ENCODE measurements at regions of chr12 and their contacts with region 1.

Region 1: GRCh38 chr12:22443379-22444316 is 100.7 kb downstream of the C2CD5 start:
- H3K4me3 Mint-ChIP-seq: no peak overlapping the region
- H3K27ac Mint-ChIP-seq: no peak overlapping the region
- H3K4me1 Mint-ChIP-seq: peaks cover 11% of the 10 kb centered on the region
- H3K27me3 Mint-ChIP-seq: peaks cover 2% of the 10 kb centered on the region

Region 2: GRCh38 chr12:22083167-22083566 is 360.5 kb before region 1 on chr12:
- intact Hi-C with region 1: loop called (anchors 5 kb)
- H3K4me3 Mint-ChIP-seq: no peak overlapping the region
- H3K27ac Mint-ChIP-seq: no peak overlapping the region
- H3K4me1 Mint-ChIP-seq: peaks cover 6% of the 10 kb centered on the region
- H3K27me3 Mint-ChIP-seq: no peaks in the 10 kb centered on the region

Region 3: DNA sequence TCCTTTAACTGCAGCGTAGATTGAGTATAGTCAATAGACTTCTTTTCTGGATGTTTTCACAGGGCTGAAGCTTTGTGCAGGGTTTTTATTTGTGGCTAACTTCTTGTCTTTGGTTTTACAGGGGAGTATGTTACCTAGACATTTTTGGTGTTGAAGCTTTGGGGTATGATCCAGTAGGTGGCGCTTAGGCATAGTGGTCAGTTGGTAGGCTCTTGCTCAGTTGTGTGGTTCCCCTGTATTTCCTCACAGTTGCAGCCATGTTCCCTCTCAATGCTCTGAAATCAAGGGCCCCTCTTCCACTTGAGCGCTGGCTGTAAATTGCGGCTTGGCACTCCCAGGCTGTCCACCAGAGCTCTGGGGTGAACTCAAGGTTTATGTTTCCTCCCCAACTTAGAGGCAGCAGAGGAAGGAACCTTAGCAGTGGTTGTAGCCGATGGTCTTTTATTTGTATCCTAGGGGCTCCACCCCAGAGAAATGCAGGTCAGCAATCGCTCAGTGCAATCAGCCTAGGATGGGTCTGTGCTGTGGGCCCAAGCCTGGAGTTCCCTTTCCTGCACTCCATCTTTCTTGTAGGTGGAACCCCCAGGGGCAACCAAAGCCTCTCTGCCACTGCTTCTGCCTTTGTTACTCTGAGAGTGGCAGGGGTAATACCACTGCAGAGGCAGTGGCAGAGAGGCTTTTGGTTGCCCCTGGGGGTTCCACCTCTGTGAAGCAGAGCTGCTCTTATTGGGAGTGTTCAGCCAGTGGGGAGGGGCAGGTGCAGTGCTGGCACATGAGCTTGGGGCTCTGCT is 342.5 kb before region 1 on chr12:
- intact Hi-C with region 1: loop called (anchors 1 kb)
- H3K4me3 Mint-ChIP-seq: no peak overlapping the region
- H3K27ac Mint-ChIP-seq: no peak overlapping the region
- H3K4me1 Mint-ChIP-seq: peaks cover 16% of the 10 kb centered on the region
- H3K27me3 Mint-ChIP-seq: no peaks in the 10 kb centered on the region

Region 4: GRCh38 chr12:22334410-22335290 is 109.0 kb before region 1 on chr12 and contains the start of gene ST8SIA1:
- intact Hi-C with region 1: loop called (anchors 10 kb)
- H3K4me3 Mint-ChIP-seq: peak within 1 kb of the TSS; percentile 86
- H3K27ac Mint-ChIP-seq: peak within 1 kb of the TSS; percentile 63
- H3K4me1 Mint-ChIP-seq: peaks cover 46% of the 10 kb centered on the region
- H3K27me3 Mint-ChIP-seq: peaks cover 57% of the 10 kb centered on the region

Measured in dendritic cell treated with granulocyte-macrophage colony-stimulating factor and Interleukin-4, amounts not matched to agents 40 ng/mL and 50 ng/mL, for 4 days (primary cell).